Naive thymus-derived CD4-positive, alpha-beta T cell (primary cell): ENCODE measurements at regions of chr9 and their contacts with region 1.

Region 1: GRCh38 chr9:78406933-78407332 is 110.0 kb downstream of the PSAT1 start:
- DNase-seq: no peak
- ATAC-seq: no peak
- H3K4me3 ChIP-seq: no peak overlapping the region
- H3K4me3 Mint-ChIP-seq: no peak overlapping the region
- H3K27ac ChIP-seq: no peak overlapping the region
- H3K27ac Mint-ChIP-seq: no peak overlapping the region
- H3K4me1 ChIP-seq: no peaks in the 10 kb centered on the region
- H3K4me1 Mint-ChIP-seq: no peaks in the 10 kb centered on the region
- H3K27me3 ChIP-seq: no peaks in the 10 kb centered on the region
- H3K27me3 Mint-ChIP-seq: peaks cover 0 to 12% (median 5%) of the 10 kb centered on the region in 5 donors

Region 2: DNA sequence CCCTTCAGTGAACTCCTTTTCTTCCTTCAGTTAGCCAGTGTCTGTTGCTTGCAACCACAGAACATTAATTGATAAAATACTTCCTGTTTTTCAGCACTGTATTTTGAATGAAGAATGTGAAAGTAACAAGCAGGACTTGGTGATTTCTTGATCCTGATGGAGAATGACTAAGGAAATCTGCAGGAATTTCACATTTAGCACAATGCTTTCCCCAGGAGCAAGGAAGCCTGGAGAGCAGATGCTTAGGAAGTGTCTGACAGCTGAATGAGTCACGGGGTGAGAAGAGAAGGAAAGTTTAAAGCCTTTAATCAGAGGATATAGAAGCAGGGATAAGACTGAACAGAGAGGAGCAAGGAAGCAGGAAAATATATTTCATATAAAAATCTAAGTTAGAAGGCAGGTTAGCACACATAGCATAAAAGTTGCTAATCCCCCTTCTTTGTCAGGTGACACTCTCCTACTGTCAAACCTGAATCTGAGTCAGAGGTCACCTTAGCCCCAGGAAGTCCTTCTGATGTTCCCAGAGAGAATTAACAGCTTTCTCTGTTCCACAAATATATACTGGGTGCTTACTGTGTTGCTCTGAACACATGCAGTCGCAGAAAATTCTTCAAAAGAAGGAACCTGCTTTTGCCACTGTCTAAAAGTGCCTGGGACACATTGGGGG is 818.5 kb before region 1 on chr9:
- CTCF ChIA-PET with region 1: no interaction called
- POLR2A ChIA-PET with region 1: no interaction called
- intact Hi-C with region 1: loop called in 1 of 2 experiments (anchors 5 kb)
- DNase-seq: no peak
- ATAC-seq: no peak
- H3K4me3 ChIP-seq: no peak overlapping the region
- H3K4me3 Mint-ChIP-seq: no peak overlapping the region
- H3K27ac ChIP-seq: no peak overlapping the region
- H3K27ac Mint-ChIP-seq: no peak overlapping the region
- H3K4me1 ChIP-seq: no peaks in the 10 kb centered on the region
- H3K4me1 Mint-ChIP-seq: peaks cover 0 to 4% (median 0%) of the 10 kb centered on the region in 7 donors
- H3K27me3 ChIP-seq: no peaks in the 10 kb centered on the region
- H3K27me3 Mint-ChIP-seq: peaks cover 5 to 13% (median 9%) of the 10 kb centered on the region in 5 donors